KBM-7 (cell line): ENCODE measurements at regions of chr5 and their contacts with region 1.

Region 1: GRCh38 chr5:149834246-149834855 is 104.2 kb downstream of the PPARGC1B start:
- DNase-seq: peak; percentile 71

Region 2: GRCh38 chr5:149990518-149991376 is 156.4 kb after region 1 on chr5:
- in situ Hi-C with region 1: loop called (anchors 10 kb)
- DNase-seq: peak; percentile 75

Region 3: DNA sequence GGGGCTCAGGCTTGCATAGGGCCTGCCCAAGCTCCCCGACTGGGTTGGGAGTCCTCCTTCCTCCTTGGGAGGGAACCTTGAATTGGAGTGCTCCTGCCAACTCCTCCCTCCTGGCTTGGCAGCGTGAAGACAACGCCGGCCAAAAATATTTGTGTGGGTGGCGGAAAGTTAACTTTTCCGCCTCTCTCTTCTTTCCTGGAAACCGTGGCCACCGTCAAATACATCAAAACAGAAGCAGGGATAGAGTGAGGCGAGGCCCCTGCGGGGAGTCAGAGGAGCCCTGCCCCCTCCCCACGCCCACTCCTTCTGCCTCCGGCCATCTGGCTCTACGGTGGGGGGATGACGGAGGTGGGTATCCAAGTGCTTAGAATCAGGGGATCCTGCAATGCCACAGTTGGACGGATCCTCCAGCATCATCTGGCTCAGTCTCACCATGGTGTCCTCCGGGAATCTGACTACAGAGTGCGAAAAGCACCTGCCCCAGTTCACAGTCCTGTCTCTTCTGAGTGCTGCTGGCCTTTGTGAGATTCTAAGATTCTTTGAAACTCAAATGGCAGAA is 780.9 kb after region 1 on chr5:
- in situ Hi-C with region 1: no loop called
- DNase-seq: no peak